Activated CD4-positive, alpha-beta memory T cell treated with anti-CD3 and anti-CD28 coated beads for 36 hours (primary cell): ENCODE measurements at regions of chr3 and their contacts with region 1.

Region 1: GRCh38 chr3:64533617-64534317 is 154.0 kb downstream of the ADAMTS9 start:
- DNase-seq: peak; percentile 65
- H3K4me3 Mint-ChIP-seq: no peak overlapping the region
- H3K27ac Mint-ChIP-seq: no peak overlapping the region
- H3K4me1 Mint-ChIP-seq: peaks cover 2% of the 10 kb centered on the region
- H3K27me3 Mint-ChIP-seq: peaks cover 5% of the 10 kb centered on the region

Region 2: GRCh38 chr3:64431526-64432091 is 102.2 kb before region 1 on chr3:
- CTCF ChIA-PET with region 1: no interaction called
- POLR2A ChIA-PET with region 1: no interaction called
- intact Hi-C with region 1: no loop called
- DNase-seq: no peak
- H3K4me3 Mint-ChIP-seq: no peak overlapping the region
- H3K27ac Mint-ChIP-seq: no peak overlapping the region
- H3K4me1 Mint-ChIP-seq: no peaks in the 10 kb centered on the region
- H3K27me3 Mint-ChIP-seq: peaks cover 6% of the 10 kb centered on the region

Region 3: GRCh38 chr3:65439641-65440284 is 906.0 kb after region 1 on chr3:
- CTCF ChIA-PET with region 1: no interaction called
- POLR2A ChIA-PET with region 1: no interaction called
- intact Hi-C with region 1: loop called (anchors 5 kb)
- DNase-seq: no peak
- H3K4me3 Mint-ChIP-seq: no peak overlapping the region
- H3K27ac Mint-ChIP-seq: no peak overlapping the region
- H3K4me1 Mint-ChIP-seq: no peaks in the 10 kb centered on the region
- H3K27me3 Mint-ChIP-seq: no peaks in the 10 kb centered on the region